Mammary epithelial cell (primary cell): ENCODE measurements at regions of chr20 and their contacts with region 1.

Region 1: DNA sequence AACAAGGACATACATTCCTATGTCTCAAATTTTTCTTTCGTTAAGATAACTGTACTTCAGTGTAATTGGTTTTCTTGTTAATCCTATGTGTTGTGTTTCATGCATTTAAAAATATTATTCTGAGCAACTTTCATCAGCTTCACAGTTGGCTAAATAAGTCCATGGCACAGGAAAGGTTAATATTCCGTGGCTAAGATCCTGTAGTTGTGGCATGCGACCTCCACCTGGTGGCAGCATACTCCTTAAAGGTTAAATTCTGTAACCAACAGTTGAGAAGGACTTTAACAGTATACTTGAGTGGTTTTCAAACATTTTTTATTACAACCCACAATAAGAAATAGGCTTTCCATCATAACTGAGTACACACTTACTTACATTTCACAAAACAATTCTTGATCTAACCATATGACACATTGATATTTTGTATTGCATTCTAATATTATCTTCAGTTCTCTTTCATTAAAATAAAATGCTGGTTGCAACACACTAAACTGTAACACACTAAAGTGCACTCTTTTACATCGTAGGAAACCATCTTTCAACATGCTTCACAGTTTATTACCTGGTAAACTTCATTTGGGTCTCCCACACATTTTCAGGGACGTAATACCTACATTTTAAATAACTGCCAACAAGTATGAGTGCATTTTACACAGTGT is 118.3 kb downstream of the SLX4IP start:
- DNase-seq: peak; percentile 69
- H3K4me3 ChIP-seq: no peak overlapping the region
- H3K27ac ChIP-seq: no peak overlapping the region
- H3K4me1 ChIP-seq: peaks cover 55% of the 10 kb centered on the region
- H3K27me3 ChIP-seq: no peaks in the 10 kb centered on the region
- CTCF ChIP-seq: peak; percentile 81 to 95

Region 2: DNA sequence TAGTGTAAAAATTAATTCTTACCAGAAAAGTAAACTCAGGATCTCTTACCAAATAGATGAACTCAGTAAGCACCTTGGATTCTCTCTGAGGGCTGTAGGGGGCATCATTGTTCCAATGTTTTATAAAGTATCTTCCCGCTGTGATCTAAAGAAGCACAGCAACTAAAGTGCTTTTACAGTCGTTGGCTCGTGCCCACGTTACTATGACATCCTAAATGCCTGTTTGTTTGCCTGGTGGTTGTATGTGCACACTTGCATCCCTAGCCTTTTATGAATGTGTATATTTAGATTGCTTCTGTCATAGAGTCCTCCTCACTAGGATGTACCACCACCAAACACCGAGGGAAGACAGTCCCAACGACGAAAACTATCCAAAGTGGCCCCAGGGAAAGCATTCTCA is 83.9 kb before region 1 on chr20:
- CTCF ChIA-PET with region 1: no interaction called
- dilution Hi-C with region 1: no loop called
- in situ Hi-C with region 1: no loop called
- intact Hi-C with region 1: loop called (anchors 1 kb)
- DNase-seq: peak; percentile 73
- H3K4me3 ChIP-seq: no peak overlapping the region
- H3K27ac ChIP-seq: peak overlapping the region; percentile 37
- H3K4me1 ChIP-seq: peaks cover 20% of the 10 kb centered on the region
- H3K27me3 ChIP-seq: no peaks in the 10 kb centered on the region
- CTCF ChIP-seq: peak; percentile 73 to 75

Region 3: GRCh38 chr20:10578607-10579006 is 25.2 kb after region 1 on chr20:
- CTCF ChIA-PET with region 1: no interaction called
- dilution Hi-C with region 1: no loop called
- in situ Hi-C with region 1: no loop called
- intact Hi-C with region 1: no loop called
- DNase-seq: peak; percentile 90
- H3K4me3 ChIP-seq: no peak overlapping the region
- H3K27ac ChIP-seq: peak overlapping the region; percentile 31
- H3K4me1 ChIP-seq: peaks cover 48% of the 10 kb centered on the region
- H3K27me3 ChIP-seq: no peaks in the 10 kb centered on the region
- CTCF ChIP-seq: no peak

Region 4: GRCh38 chr20:10647465-10647864 is 94.0 kb after region 1 on chr20:
- CTCF ChIA-PET with region 1: no interaction called
- dilution Hi-C with region 1: no loop called
- in situ Hi-C with region 1: loop called (anchors 5 to 10 kb)
- intact Hi-C with region 1: loop called (anchors 1 kb)
- DNase-seq: no peak
- H3K4me3 ChIP-seq: no peak overlapping the region
- H3K27ac ChIP-seq: no peak overlapping the region
- H3K4me1 ChIP-seq: peaks cover 4% of the 10 kb centered on the region
- H3K27me3 ChIP-seq: no peaks in the 10 kb centered on the region
- CTCF ChIP-seq: peak; percentile 26 to 42

Region 5: DNA sequence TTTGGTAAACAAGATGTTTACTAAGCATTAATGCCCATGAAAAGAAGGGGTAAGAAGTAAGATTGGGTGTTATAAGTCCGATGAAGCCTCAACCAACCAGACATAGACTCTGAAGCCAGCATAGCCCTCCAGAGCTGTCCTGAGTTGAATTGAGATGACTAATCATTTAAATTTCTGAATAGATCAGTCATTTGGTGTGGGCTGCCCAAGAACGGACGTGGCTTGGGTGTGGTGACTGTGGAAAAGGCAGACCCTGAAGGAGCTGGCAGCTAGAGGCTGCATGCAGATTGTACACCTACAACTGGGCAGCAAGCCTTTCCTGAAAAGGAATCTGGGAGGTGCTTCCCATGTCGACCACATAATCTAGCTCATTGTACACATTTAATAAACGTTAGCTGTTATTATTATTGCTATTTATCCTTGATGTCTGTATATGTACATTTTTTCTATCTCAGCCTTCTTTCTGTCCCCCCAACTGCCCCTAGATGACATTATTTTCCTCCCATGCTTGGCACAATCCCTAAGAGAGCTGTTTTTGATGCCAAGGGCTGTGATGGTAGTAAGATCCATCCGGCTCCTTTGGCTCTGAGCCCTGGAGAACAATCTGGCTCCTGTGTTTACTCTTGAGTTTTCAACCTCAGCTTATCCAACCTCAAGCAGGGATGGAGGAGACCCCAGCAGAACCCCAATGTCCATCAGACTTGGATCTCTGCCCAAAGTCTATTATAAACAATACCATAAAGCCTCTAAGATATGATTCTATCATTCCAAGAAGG is 177.9 kb after region 1 on chr20:
- CTCF ChIA-PET with region 1: no interaction called
- dilution Hi-C with region 1: no loop called
- in situ Hi-C with region 1: no loop called
- intact Hi-C with region 1: loop called (anchors 10 kb)
- DNase-seq: peak; percentile 64
- H3K4me3 ChIP-seq: no peak overlapping the region
- H3K27ac ChIP-seq: peak overlapping the region; percentile 64
- H3K4me1 ChIP-seq: peaks cover 47% of the 10 kb centered on the region
- H3K27me3 ChIP-seq: no peaks in the 10 kb centered on the region
- CTCF ChIP-seq: no peak

Region 6: DNA sequence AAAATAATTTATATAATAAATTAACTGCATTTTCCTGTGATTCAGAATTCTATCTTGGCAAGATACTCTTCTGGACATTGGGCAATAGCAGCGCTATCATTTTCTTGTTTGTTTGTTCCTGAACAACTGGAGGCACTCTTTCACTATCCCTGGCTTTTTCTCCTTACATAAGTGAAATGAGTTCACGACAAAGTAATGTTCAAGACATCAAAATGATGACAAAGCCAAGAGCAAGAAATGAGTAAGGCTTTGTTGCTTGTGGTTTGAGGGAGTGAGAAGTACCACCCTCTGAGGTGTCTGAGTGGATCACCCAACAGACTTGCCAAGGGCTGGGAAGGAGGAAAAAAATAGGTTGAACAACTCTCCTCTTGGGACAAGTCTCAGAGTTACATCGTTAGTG is 586.9 kb after region 1 on chr20:
- CTCF ChIA-PET with region 1: no interaction called
- dilution Hi-C with region 1: no loop called
- in situ Hi-C with region 1: no loop called
- intact Hi-C with region 1: loop called (anchors 5 kb)
- DNase-seq: peak; percentile 98
- H3K4me3 ChIP-seq: no peak overlapping the region
- H3K27ac ChIP-seq: peak overlapping the region; percentile 74
- H3K4me1 ChIP-seq: peaks cover 21% of the 10 kb centered on the region
- H3K27me3 ChIP-seq: no peaks in the 10 kb centered on the region
- CTCF ChIP-seq: peak in 1 of 2 donors; percentile 42